ENCODE measurements at regions of chr5 and their contacts with region 1.

Region 1: DNA sequence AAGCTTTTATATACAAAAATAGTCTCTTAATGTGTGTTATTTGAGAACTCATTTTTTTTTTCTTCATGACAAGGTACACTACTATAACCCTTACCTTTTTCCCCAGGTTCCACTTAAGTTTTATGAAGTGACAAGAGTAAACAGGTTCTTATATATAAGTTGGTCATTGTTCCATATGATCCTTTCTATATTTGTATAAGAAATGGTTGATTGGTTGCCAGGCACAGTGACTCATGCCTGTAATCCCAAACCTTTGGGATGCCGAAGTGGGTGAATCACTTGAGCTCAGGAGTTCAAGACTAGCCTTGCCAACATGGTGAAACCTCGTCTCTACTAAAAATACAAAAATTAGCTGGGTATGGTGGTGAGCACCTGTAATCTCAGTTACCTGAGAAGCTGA is 108.3 kb downstream of the PCSK1 start:
- DNase-seq: no peak
- H3K4me3 ChIP-seq: no peak overlapping the region
- H3K27ac ChIP-seq: no peak overlapping the region
- H3K4me1 ChIP-seq: peaks cover 0 to 16% (median 2%) of the 10 kb centered on the region in 4 donors
- H3K27me3 ChIP-seq: no peaks in the 10 kb centered on the region
- CTCF ChIP-seq: no peak

Region 2: GRCh38 chr5:96219580-96220281 is 105.0 kb before region 1 on chr5:
- intact Hi-C with region 1: loop called (anchors 10 kb)
- DNase-seq: no peak
- H3K4me3 ChIP-seq: no peak overlapping the region
- H3K27ac ChIP-seq: peak overlapping the region; percentile 32 to 59
- H3K4me1 ChIP-seq: peaks cover 0 to 23% (median 6%) of the 10 kb centered on the region in 4 donors
- H3K27me3 ChIP-seq: no peaks in the 10 kb centered on the region
- CTCF ChIP-seq: no peak

Region 3: DNA sequence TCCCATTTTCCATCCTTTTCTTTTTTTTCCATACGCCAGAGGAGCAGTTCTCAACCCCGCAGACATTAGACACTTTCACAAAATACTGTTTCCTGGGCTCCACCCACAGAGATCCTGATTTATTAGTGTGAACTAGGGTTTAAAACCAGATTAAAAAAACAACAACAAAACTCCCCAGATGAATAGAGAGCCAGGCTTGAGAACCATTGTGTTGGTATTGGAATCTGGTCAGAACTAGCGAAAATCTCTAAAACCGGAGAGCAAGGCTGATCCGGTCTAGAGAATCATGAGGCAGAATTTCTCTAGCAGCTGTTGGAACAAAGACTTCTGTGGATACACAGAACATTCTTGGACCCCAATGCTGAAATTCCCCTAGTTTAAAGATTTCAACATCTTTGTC is 64.7 kb before region 1 on chr5:
- intact Hi-C with region 1: loop called (anchors 10 kb)
- DNase-seq: no peak
- H3K4me3 ChIP-seq: no peak overlapping the region
- H3K27ac ChIP-seq: peak overlapping the region; percentile 72 to 74
- H3K4me1 ChIP-seq: peaks cover 0 to 60% (median 17%) of the 10 kb centered on the region in 4 donors
- H3K27me3 ChIP-seq: no peaks in the 10 kb centered on the region
- CTCF ChIP-seq: no peak

Measured in tibial artery (tissue), 4 donors.